ENCODE measurements at regions of chr17 and their contacts with region 1.

Region 1: GRCh38 chr17:30482555-30482954 is 5.3 kb downstream of the GOSR1 start:
- DNase-seq: no peak
- H3K4me3 ChIP-seq: no peak overlapping the region
- H3K27ac ChIP-seq: no peak overlapping the region
- H3K4me1 ChIP-seq: no peaks in the 10 kb centered on the region
- H3K27me3 ChIP-seq: no peaks in the 10 kb centered on the region
- CTCF ChIP-seq: no peak

Region 2: GRCh38 chr17:30062372-30062771 is 420.2 kb before region 1 on chr17:
- CTCF ChIA-PET with region 1: no interaction called
- POLR2A ChIA-PET with region 1: no interaction called
- intact Hi-C with region 1: no loop called
- DNase-seq: no peak
- H3K4me3 ChIP-seq: no peak overlapping the region
- H3K27ac ChIP-seq: no peak overlapping the region
- H3K4me1 ChIP-seq: no peaks in the 10 kb centered on the region
- H3K27me3 ChIP-seq: no peaks in the 10 kb centered on the region
- CTCF ChIP-seq: no peak

Region 3: DNA sequence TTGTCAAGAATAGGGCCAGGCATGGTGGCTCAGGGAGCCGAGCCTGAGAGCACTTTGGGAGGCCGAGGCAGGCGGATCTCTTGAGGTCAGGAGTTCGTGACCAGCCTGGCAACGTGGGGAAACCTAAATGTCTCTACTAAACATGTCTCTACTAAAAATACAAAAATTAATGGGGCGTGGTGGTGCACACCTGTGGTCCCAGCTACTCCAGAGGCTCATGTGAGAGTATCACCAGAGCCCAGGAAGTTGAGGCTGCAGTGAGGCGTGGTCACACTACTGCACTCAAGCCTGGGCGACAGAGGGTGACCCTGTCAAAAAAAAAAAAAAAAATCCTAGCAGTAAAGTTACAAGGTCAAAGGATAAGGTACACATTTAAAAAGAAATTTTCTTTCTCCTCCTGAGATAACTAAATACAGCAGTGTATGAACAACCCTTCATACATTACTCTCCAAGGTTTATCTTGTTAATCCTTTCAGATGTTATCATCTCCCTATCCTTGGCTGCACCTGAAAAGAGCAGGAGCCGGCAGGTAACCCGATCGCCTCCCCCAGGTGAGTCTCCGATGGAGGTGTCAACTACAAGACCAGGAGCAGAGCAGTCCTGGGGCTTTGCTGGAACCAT is 117.0 kb after region 1 on chr17:
- CTCF ChIA-PET with region 1: no interaction called
- POLR2A ChIA-PET with region 1: no interaction called
- intact Hi-C with region 1: loop called (anchors 10 kb)
- DNase-seq: no peak
- H3K4me3 ChIP-seq: peak overlapping the region; percentile 94
- H3K27ac ChIP-seq: peak overlapping the region; percentile 96
- H3K4me1 ChIP-seq: no peaks in the 10 kb centered on the region
- H3K27me3 ChIP-seq: no peaks in the 10 kb centered on the region
- CTCF ChIP-seq: no peak